ENCODE measurements at regions of chr2 and their contacts with region 1.

Region 1: GRCh38 chr2:121471532-121472469 is 58.9 kb upstream of the RNU4ATAC start:
- DNase-seq: peak; percentile 22
- H3K4me3 Mint-ChIP-seq: no peak overlapping the region
- H3K27ac Mint-ChIP-seq: peak overlapping the region; percentile 42
- H3K4me1 Mint-ChIP-seq: peaks cover 34% of the 10 kb centered on the region
- H3K27me3 Mint-ChIP-seq: no peaks in the 10 kb centered on the region
- CTCF ChIP-seq: no peak

Region 2: DNA sequence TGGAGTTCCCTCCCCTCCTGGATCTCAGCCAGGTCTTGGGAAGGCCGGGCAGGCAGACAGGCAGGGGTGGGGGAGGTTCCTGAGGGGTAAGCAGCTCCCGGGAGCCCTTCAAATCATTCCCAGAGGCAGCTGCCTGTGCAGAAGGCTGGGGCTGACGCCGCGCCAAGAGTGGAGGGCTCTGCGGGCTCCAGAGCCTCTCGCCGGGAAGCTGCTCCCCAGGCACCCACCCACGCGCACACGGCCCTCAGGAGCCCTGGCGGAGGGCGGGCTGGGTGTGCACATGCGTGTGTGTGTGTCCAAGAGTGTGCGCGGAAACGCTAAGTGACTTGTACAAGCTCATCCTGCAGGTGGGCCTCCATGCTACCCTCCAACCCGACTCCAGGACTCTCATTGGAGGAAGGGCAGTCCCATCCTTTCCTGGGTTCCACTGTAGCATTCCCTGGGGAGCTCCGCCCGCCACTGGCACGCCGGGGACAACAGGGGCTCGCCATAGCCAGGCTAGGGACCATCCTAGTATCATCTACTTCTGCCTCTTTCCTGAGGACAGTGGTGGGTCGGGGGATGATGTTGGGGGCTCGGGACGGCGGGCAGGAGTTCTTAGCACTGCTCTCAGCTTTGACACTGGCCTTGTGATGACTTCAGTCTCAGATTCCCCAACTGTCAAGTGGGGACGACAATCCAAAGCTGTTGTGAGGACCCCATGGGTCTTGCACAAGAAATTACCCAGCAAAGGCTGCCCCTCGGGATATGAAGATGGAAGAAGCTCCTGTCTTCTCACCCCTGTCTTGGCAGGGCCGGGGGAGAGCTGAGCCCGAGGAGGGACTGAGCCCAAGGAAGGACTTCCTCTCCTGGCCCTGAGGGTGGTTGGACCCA is 1075.6 kb before region 1 on chr2:
- CTCF ChIA-PET with region 1: no interaction called
- POLR2A ChIA-PET with region 1: no interaction called
- intact Hi-C with region 1: no loop called
- DNase-seq: no peak
- H3K4me3 Mint-ChIP-seq: no peak overlapping the region
- H3K27ac Mint-ChIP-seq: no peak overlapping the region
- H3K4me1 Mint-ChIP-seq: no peaks in the 10 kb centered on the region
- H3K27me3 Mint-ChIP-seq: no peaks in the 10 kb centered on the region
- CTCF ChIP-seq: no peak

Region 3: DNA sequence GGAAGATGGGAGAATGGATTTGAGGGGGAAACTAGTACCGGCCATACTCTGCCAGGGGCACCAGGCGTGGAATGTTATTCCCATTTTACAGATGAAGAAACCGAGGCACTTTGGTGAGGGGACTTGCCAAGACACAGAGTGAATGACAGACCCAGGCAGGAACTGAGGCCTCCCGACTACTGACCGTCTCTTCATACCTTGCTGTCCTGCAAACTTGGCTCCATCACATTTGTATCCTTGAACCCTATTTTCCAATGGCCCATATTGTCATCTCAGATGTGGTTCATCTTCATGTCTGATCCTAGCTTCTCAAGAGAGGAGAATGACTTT is 180.6 kb before region 1 on chr2:
- CTCF ChIA-PET with region 1: no interaction called
- POLR2A ChIA-PET with region 1: no interaction called
- intact Hi-C with region 1: no loop called
- DNase-seq: no peak
- H3K4me3 Mint-ChIP-seq: no peak overlapping the region
- H3K27ac Mint-ChIP-seq: peak overlapping the region; percentile 63
- H3K4me1 Mint-ChIP-seq: peaks cover 12% of the 10 kb centered on the region
- H3K27me3 Mint-ChIP-seq: no peaks in the 10 kb centered on the region
- CTCF ChIP-seq: no peak

Region 4: DNA sequence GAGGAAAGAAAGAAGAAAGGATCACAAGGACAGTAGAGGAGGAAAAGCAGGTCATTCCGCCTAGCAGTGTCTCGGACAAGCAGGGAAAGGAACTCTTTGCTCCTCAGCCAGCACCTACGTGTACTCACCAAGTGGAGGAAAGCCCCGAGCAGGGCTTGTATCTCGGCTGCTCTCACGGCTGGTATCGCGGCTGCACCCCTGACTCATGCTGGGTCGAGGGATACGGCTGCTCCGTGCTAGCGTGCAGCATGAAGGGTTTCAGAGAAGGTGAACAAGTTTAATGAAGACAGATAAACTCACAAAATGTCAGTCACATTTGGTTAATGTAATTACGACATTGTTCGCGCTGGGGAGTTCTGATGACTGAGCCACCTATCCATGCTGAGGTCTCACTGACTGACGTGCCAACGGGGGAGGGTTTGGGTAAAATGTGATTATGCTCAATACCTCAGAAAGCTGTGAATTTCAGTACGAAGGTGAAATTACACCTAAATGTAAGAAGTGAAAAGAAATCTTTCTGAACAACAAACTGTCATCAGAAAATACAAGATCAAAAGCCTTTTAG is 53.2 kb before region 1 on chr2:
- CTCF ChIA-PET with region 1: no interaction called
- POLR2A ChIA-PET with region 1: no interaction called
- intact Hi-C with region 1: no loop called
- DNase-seq: no peak
- H3K4me3 Mint-ChIP-seq: no peak overlapping the region
- H3K27ac Mint-ChIP-seq: no peak overlapping the region
- H3K4me1 Mint-ChIP-seq: no peaks in the 10 kb centered on the region
- H3K27me3 Mint-ChIP-seq: no peaks in the 10 kb centered on the region
- CTCF ChIP-seq: no peak

Region 5: DNA sequence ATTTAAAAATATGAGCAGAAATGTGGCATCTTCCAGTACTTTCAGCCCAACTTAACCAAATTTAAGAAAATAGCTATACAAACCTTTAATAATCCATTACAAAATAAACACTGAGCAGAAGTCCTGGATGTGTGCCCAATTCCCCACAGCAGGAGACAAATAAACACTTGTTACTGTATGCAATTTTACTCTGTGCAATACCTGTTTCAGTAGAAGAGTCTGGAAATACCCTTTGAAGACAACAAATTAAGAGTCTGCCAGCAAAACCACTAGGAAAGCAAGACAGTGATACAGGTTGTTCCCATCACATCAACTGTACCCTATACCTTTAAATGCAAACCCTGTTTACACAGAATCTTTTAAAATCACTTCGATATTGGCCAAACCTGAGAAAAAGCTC is 17.5 kb after region 1 on chr2:
- CTCF ChIA-PET with region 1: interaction called, 6 read pairs
- POLR2A ChIA-PET with region 1: interaction called, 14 read pairs
- intact Hi-C with region 1: no loop called
- DNase-seq: peak; percentile 92
- H3K4me3 Mint-ChIP-seq: no peak overlapping the region
- H3K27ac Mint-ChIP-seq: no peak overlapping the region
- H3K4me1 Mint-ChIP-seq: peaks cover 27% of the 10 kb centered on the region
- H3K27me3 Mint-ChIP-seq: no peaks in the 10 kb centered on the region
- CTCF ChIP-seq: no peak